ENCODE measurements at regions of chr7 and their contacts with region 1.

Region 1: DNA sequence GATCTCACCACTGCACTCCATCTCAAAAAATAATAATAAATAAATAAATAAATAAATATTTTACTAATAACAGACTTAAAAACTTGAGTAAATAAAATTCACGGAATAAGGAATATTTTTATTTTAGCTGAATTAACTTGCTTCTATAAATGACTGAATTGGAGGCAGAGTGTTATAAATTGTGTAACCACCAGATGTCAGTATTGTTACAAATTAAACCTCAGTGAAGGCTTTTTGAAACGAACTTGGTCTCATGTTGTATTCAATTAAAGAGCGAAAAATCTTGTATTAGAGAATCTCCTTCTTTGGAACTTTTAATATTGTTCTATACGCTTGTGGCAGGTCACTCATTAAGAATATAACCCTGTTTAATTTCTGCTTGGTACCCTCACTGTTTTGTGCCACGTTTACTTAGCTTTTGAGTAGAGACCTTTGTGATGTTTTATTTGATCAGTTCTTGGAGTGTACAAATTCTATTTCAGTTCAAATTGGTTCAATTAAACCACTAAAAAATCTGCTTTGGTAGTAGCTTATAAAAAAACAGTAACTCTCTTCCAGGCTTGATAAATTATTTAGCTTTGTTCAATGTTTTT is 45.6 kb upstream of the SCIN start:
- DNase-seq: peak; percentile 56
- H3K4me3 Mint-ChIP-seq: no peak overlapping the region
- H3K27ac Mint-ChIP-seq: no peak overlapping the region
- H3K4me1 Mint-ChIP-seq: no peaks in the 10 kb centered on the region
- H3K27me3 Mint-ChIP-seq: peaks cover 35% of the 10 kb centered on the region
- CTCF ChIP-seq: peak; percentile 56

Region 2: GRCh38 chr7:12540850-12541249 is 16.0 kb after region 1 on chr7:
- CTCF ChIA-PET with region 1: interaction called, 16 read pairs
- POLR2A ChIA-PET with region 1: interaction called, 5 read pairs
- intact Hi-C with region 1: no loop called
- DNase-seq: peak; percentile 30
- H3K4me3 Mint-ChIP-seq: no peak overlapping the region
- H3K27ac Mint-ChIP-seq: no peak overlapping the region
- H3K4me1 Mint-ChIP-seq: peaks cover 5% of the 10 kb centered on the region
- H3K27me3 Mint-ChIP-seq: no peaks in the 10 kb centered on the region
- CTCF ChIP-seq: no peak

Region 3: GRCh38 chr7:12609561-12609960 is 84.7 kb after region 1 on chr7:
- CTCF ChIA-PET with region 1: interaction called, 10 read pairs
- POLR2A ChIA-PET with region 1: no interaction called
- intact Hi-C with region 1: no loop called
- DNase-seq: no peak
- H3K4me3 Mint-ChIP-seq: no peak overlapping the region
- H3K27ac Mint-ChIP-seq: no peak overlapping the region
- H3K4me1 Mint-ChIP-seq: no peaks in the 10 kb centered on the region
- H3K27me3 Mint-ChIP-seq: no peaks in the 10 kb centered on the region
- CTCF ChIP-seq: no peak

Region 4: DNA sequence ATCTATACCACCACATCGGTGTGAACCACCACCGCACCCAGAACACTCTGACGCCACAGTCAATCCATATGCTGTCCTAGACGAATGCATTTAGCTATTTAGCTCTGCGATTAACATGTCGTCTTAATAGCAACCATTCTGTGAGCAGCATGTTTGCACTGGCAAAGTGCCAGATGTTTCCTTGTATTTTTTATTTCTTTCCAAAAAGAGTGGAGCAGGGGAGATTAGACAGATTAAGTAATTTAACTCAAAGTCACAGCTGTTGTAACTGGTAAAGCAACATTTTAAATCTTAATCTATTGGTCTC is 105.6 kb after region 1 on chr7:
- CTCF ChIA-PET with region 1: interaction called, 79 read pairs
- POLR2A ChIA-PET with region 1: interaction called, 5 read pairs
- intact Hi-C with region 1: no loop called
- DNase-seq: no peak
- H3K4me3 Mint-ChIP-seq: no peak overlapping the region
- H3K27ac Mint-ChIP-seq: no peak overlapping the region
- H3K4me1 Mint-ChIP-seq: no peaks in the 10 kb centered on the region
- H3K27me3 Mint-ChIP-seq: peaks cover 23% of the 10 kb centered on the region
- CTCF ChIP-seq: no peak

Region 5: GRCh38 chr7:13262929-13263530 is 738.1 kb after region 1 on chr7:
- CTCF ChIA-PET with region 1: interaction called, 11 read pairs
- POLR2A ChIA-PET with region 1: interaction called, 4 read pairs
- intact Hi-C with region 1: loop called (anchors 1 kb)
- DNase-seq: peak; percentile 57
- H3K4me3 Mint-ChIP-seq: no peak overlapping the region
- H3K27ac Mint-ChIP-seq: no peak overlapping the region
- H3K4me1 Mint-ChIP-seq: no peaks in the 10 kb centered on the region
- H3K27me3 Mint-ChIP-seq: no peaks in the 10 kb centered on the region
- CTCF ChIP-seq: peak; percentile 59